ENCODE measurements at regions of chr1 and their contacts with region 1.

Region 1: GRCh38 chr1:51410568-51411460 is 80.5 kb upstream of the TTC39A start:
- H3K4me3 Mint-ChIP-seq: no peak overlapping the region
- H3K27ac Mint-ChIP-seq: no peak overlapping the region
- H3K4me1 Mint-ChIP-seq: peaks cover under 1% of the 10 kb centered on the region
- H3K27me3 Mint-ChIP-seq: no peaks in the 10 kb centered on the region

Region 2: DNA sequence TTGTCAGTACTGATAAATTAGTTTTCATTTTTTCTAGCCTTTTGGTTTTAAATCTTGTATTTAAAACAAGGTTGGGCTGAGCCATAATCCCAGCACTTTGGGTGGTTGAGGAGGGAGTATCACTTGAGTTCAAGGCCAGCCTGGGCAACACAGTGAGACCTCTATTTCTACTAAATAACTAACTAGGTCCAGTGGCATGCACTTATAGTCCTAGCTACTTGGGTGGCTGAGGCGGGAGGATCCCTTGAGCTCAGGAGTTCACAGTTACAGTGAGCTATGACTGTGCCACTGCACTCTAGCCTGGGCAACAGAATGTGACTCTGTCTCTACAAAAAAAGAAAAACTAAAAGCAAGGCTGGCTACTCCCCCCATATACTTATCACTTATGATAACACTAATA is 58.9 kb before region 1 on chr1:
- intact Hi-C with region 1: loop called (anchors 10 kb)
- H3K4me3 Mint-ChIP-seq: no peak overlapping the region
- H3K27ac Mint-ChIP-seq: no peak overlapping the region
- H3K4me1 Mint-ChIP-seq: no peaks in the 10 kb centered on the region
- H3K27me3 Mint-ChIP-seq: peaks cover 9% of the 10 kb centered on the region

Region 3: DNA sequence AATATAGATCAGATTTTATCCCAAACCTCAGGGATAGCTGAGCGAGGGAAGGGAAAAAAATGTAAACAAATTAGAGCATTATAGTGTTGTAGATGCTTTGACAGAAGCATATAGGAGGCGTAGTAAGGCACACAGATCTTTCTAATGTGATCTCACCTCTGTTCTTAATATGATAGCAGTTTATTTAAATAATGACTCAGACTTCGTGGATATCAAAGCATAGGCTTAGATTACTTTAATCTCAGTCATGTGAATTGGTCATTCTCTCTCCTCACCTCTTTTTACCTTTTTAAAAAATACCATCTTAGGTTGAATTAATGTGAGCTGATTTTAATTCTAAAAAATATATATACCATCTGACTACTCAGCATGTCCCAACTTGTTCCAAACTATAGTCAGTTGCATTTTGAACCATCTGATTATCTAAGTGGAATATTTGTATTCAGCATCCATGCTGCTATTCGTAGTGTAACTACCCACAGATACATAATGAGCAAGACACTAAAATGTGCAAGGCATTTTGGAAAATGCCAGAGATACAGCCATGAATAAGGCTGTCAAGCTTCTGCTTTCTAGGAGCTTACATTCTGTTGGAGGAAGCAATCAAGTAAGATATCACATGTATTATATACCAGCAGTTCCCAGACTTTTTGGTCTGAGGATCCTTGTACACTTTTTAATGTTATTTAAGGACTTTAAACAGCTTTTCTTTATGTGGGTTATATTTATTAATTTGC is 282.8 kb after region 1 on chr1:
- intact Hi-C with region 1: no loop called
- H3K4me3 Mint-ChIP-seq: no peak overlapping the region
- H3K27ac Mint-ChIP-seq: no peak overlapping the region
- H3K4me1 Mint-ChIP-seq: peaks cover 20% of the 10 kb centered on the region
- H3K27me3 Mint-ChIP-seq: no peaks in the 10 kb centered on the region

Region 4: DNA sequence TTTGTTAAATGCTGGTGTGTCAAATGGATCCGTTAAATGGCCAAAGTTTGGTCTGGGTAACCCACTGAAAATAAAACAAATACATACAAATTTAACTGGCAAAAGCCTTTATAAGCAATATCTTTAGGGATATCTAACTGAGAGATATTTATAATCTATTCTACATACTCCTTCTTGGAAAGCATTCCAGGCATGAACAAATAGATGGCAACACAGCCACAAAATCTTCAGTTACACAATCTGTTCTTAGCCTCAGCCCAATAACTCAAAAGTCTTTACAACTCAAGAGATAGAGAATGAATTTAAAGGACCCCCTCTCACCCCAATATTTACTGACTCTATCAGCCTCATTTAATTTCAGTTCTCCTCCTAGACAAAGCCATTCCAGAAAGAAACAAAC is 409.0 kb after region 1 on chr1:
- intact Hi-C with region 1: loop called (anchors 10 kb)
- H3K4me3 Mint-ChIP-seq: no peak overlapping the region
- H3K27ac Mint-ChIP-seq: no peak overlapping the region
- H3K4me1 Mint-ChIP-seq: no peaks in the 10 kb centered on the region
- H3K27me3 Mint-ChIP-seq: no peaks in the 10 kb centered on the region